MCF 10A (cell line): ENCODE measurements at regions of chr1 and their contacts with region 1.

Region 1: GRCh38 chr1:9004700-9005394 is 21.4 kb downstream of the SLC2A7 start:
- DNase-seq: peak; percentile 78
- H3K4me3 Mint-ChIP-seq: no peak overlapping the region
- H3K27ac Mint-ChIP-seq: no peak overlapping the region
- H3K4me1 Mint-ChIP-seq: no peaks in the 10 kb centered on the region
- H3K27me3 Mint-ChIP-seq: no peaks in the 10 kb centered on the region
- CTCF ChIP-seq: peak; percentile 87

Region 2: DNA sequence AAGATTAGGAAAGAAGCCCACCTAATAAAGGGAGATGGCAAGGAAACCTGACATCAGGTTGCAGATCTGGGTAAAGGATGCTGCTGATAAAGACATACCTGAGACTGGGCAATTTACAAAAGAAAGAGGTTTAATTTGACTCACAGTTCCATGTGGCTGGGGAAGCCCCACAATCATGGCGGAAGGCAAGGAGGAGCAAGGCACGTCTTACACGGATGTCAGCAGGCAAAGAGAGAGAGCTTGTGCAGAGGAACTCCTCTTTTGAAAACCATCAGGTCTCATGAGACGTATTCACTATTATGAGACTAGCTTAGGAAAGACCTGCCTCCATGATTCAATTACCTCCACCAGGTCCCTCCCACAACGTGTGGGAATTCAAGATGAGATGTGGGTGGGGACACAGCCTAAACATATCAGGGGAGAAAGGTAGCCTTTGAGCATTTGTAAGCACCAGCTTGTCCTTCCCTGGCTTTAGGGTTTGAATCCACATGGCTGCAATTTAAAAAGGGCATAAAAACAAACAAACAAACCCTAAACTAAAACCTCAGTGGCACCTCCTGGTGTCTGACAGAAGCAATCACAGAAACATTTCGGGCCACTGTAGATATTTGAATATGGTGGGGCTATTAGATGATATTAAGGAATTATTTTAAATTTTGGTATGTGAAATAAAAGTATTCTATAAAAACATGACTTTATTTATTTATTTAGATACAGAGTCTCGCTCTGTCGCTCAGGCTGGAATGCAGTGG is 11.7 kb before region 1 on chr1:
- CTCF ChIA-PET with region 1: interaction called, 16 read pairs
- POLR2A ChIA-PET with region 1: interaction called, 3 read pairs
- intact Hi-C with region 1: loop called (anchors 1 kb)
- DNase-seq: no peak
- H3K4me3 Mint-ChIP-seq: no peak overlapping the region
- H3K27ac Mint-ChIP-seq: no peak overlapping the region
- H3K4me1 Mint-ChIP-seq: no peaks in the 10 kb centered on the region
- H3K27me3 Mint-ChIP-seq: no peaks in the 10 kb centered on the region
- CTCF ChIP-seq: peak; percentile 14

Region 3: DNA sequence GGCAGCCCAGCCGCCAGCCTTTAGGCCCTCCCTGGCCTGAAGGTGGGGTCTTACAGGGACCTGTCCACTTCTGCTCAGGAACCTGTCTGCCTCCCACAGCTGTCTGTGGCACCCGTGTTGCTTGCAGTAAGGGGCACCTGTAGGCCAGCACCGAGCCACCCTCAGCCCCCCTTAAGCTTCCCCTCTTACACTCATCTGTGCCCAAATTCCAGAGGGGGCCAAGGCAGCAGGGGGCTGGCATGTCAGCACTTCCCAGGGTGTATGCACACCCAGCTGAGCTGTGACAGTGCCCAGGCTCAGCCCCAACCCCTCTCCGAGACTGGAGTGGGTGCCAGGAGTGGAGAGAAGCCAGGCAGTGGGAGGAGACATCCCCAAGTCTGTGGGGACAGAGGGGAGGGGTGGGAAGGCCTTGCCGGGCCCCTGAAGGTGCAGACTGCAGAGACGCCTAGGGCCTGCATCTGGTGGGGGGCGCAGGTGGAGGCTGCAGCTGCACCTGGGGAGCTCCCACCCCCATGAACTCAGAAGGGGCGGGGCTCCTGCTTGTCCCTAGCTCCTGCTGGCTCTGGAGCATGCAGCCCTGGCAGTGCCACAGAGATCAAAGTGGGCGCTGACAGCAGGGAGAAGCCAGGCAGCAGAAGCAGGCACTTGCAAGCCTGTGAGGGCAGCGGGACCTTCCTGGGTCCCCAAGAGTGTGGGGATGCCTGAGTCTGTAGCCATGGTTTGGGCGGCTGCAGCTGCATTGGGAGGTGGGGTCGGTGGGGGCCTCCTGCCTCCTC is 26.8 kb after region 1 on chr1:
- CTCF ChIA-PET with region 1: interaction called, 10 read pairs
- POLR2A ChIA-PET with region 1: no interaction called
- intact Hi-C with region 1: no loop called
- DNase-seq: no peak
- H3K4me3 Mint-ChIP-seq: no peak overlapping the region
- H3K27ac Mint-ChIP-seq: no peak overlapping the region
- H3K4me1 Mint-ChIP-seq: no peaks in the 10 kb centered on the region
- H3K27me3 Mint-ChIP-seq: no peaks in the 10 kb centered on the region
- CTCF ChIP-seq: no peak

Region 4: DNA sequence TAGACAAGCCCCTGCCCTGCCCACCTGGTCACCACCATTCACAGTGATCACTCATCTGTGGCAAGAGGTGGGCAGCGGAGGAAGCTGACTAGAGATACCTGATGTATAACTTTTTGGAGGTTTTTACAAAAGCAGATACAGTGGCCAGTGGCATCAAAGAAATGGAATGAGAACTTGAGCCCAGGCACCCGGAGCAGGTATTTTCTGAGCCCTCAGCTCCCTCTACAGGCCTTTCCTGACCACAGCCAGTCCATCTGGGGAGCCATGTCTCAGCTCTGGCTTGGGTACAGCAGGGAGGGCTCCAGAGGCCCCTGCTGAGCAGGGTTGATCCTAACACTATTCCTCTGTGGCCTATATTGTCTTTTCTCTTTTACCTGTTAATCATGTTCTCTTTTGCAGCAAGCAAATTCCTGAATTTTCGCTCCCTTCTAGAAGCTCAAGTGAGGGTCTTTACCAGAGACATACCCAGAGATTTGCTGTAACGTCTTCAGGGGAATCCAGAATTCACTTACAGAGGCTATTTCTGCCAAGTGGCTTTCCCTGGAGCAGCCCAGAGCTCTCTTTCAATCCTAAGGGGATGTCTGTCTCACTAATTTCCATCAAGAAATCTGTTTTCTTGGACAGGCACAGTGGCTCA is 96.8 kb after region 1 on chr1:
- CTCF ChIA-PET with region 1: interaction called, 30 read pairs
- POLR2A ChIA-PET with region 1: interaction called, 11 read pairs
- intact Hi-C with region 1: loop called (anchors 1 kb)
- DNase-seq: peak; percentile 65
- H3K4me3 Mint-ChIP-seq: no peak overlapping the region
- H3K27ac Mint-ChIP-seq: no peak overlapping the region
- H3K4me1 Mint-ChIP-seq: no peaks in the 10 kb centered on the region
- H3K27me3 Mint-ChIP-seq: no peaks in the 10 kb centered on the region
- CTCF ChIP-seq: peak; percentile 57